ENCODE measurements at regions of chr17 and their contacts with region 1.

Region 1: DNA sequence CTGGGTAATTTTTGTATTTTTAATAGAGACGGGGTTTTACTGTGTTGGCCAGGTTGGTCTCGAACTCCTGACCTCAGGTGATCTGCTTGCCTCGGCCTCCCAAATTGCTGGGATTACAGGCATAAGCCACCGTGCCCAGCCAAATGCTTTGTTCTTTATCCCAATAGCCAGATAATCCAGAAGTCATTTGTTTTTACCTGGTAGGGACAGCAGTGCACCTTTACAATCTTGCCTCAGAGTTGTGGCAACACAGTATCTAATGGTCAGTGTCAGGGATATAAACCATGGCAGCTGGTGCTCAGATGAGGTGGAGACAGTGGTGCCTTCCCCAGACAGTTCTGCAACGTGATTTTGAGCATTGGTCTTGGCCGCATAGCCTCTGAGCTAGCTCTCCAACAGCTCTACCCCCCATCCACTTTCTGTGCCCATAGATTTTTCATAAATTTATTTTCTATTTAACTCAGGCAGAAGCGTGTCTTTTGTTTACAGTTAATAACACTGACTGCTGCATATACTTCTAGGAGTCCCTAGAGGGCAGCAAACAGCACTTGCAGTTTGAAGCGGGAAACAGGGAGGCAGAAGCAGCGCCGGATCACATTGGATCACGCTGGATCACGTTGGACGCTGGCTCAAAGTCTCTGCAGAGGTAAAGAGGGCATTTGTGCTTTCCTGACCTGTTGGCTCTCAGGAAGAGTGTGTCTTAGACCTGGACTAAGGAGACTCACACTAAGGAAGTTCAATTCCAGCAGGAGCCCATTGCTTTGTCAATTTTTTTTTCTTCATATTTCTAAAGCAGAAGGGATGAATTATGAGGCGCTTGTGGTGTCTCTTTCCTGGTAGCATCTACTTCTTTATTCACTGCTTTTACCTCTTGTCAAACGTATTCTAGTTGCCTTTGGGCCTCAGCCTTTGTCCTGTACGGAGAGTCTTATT is 5.1 kb upstream of the GGT6 start:
- DNase-seq: no peak
- ATAC-seq: peak; percentile 78
- H3K4me3 ChIP-seq: no peak overlapping the region
- H3K27ac ChIP-seq: no peak overlapping the region
- H3K4me1 ChIP-seq: peaks cover 32% of the 10 kb centered on the region
- H3K27me3 ChIP-seq: no peaks in the 10 kb centered on the region
- CTCF ChIP-seq: peak; percentile 80 to 92 (median 86)
- EP300 ChIP-seq: no peak
- POLR2A ChIP-seq: no peak
- RAD21 ChIP-seq: peak; percentile 53

Region 2: GRCh38 chr17:4554997-4555799 is 10.3 kb before region 1 on chr17 and contains the start of gene MYBBP1A:
- CTCF ChIA-PET with region 1: interaction called, 60 read pairs
- POLR2A ChIA-PET with region 1: interaction called, 4 read pairs
- RAD21 ChIA-PET with region 1: interaction called, 4 read pairs
- SMC1A ChIA-PET with region 1: no interaction called
- in situ Hi-C with region 1: no loop called
- intact Hi-C with region 1: no loop called
- DNase-seq: peak; percentile 83
- ATAC-seq: peak; percentile 93
- H3K4me3 ChIP-seq: peak within 1 kb of the TSS; percentile 96
- H3K27ac ChIP-seq: peak within 1 kb of the TSS; percentile 87
- H3K4me1 ChIP-seq: peaks cover 21% of the 10 kb centered on the region
- H3K27me3 ChIP-seq: no peaks in the 10 kb centered on the region
- CTCF ChIP-seq: 0 out of 6 replicates have a peak, but pooled peaks of 1 of the 3 experiments have one; percentile 12
- EP300 ChIP-seq: no peak
- POLR2A ChIP-seq: peak; percentile 95
- RAD21 ChIP-seq: no peak
- polyA plus RNA-seq, gene MYBBP1A: 2.5 to 4.2 TPM

Region 3: DNA sequence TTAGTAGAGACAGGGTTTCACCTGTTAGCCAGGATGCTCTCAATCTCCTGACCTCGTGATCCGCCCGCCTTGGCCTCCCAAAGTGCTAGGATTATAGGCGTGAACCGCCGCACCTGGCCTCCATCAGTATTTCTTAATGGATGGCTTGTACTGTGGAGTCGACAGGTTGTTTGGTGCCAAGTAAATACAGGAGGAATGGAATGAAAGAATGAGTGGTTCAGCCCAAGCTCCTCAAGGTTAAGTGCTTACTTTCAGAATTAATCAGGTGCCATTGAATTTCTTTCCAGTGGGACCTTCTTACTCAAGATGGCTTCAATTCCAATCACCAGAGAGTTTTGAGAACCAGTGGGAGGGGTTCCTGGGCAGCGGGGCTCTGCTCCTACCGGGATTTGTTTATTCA is 51.0 kb after region 1 on chr17:
- CTCF ChIA-PET with region 1: interaction called, 12 read pairs
- POLR2A ChIA-PET with region 1: no interaction called
- RAD21 ChIA-PET with region 1: interaction called, 4 read pairs
- SMC1A ChIA-PET with region 1: interaction called, 3 read pairs
- in situ Hi-C with region 1: loop called (anchors 5 kb)
- intact Hi-C with region 1: no loop called
- DNase-seq: no peak
- ATAC-seq: no peak
- H3K4me3 ChIP-seq: no peak overlapping the region
- H3K27ac ChIP-seq: no peak overlapping the region
- H3K4me1 ChIP-seq: no peaks in the 10 kb centered on the region
- H3K27me3 ChIP-seq: no peaks in the 10 kb centered on the region
- CTCF ChIP-seq: no peak
- EP300 ChIP-seq: no peak
- POLR2A ChIP-seq: no peak
- RAD21 ChIP-seq: no peak

Region 4: DNA sequence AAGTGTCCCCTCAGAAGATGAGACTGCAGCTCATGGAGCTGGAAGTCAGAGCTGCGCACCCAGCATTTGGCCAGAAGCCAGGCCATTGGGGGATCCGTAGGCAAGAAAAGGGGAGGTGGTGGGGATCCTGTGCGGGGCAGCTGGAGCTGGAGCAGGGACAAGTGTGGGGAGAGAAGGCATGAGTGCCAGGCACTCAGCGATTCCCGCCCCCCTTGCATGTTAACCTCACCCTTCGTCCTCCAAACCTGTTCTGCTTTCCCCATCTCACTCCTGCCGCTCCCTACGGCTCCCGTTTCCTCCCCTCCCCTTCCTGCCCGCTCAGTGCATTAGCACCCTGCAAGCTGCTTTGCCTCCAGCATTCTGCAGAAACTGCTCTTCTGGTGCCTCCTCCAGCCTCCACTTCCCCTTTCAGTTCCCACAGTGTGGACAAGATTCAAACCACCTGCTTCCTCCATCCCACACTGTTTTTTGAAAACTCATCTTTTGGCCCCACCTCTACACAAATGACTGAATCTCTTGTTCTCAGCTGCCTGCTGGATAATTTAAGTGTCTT is 70.4 kb after region 1 on chr17:
- CTCF ChIA-PET with region 1: interaction called, 15 read pairs
- POLR2A ChIA-PET with region 1: no interaction called
- RAD21 ChIA-PET with region 1: interaction called, 4 read pairs
- SMC1A ChIA-PET with region 1: no interaction called
- in situ Hi-C with region 1: no loop called
- intact Hi-C with region 1: no loop called
- DNase-seq: peak; percentile 64
- ATAC-seq: peak; percentile 88
- H3K4me3 ChIP-seq: no peak overlapping the region
- H3K27ac ChIP-seq: no peak overlapping the region
- H3K4me1 ChIP-seq: peaks cover 22% of the 10 kb centered on the region
- H3K27me3 ChIP-seq: peaks cover 0 to 2% of the 10 kb centered on the region in 2 experiments; a peak in 2 of 4 replicates
- CTCF ChIP-seq: no peak
- EP300 ChIP-seq: no peak
- POLR2A ChIP-seq: no peak
- RAD21 ChIP-seq: no peak

Region 5: DNA sequence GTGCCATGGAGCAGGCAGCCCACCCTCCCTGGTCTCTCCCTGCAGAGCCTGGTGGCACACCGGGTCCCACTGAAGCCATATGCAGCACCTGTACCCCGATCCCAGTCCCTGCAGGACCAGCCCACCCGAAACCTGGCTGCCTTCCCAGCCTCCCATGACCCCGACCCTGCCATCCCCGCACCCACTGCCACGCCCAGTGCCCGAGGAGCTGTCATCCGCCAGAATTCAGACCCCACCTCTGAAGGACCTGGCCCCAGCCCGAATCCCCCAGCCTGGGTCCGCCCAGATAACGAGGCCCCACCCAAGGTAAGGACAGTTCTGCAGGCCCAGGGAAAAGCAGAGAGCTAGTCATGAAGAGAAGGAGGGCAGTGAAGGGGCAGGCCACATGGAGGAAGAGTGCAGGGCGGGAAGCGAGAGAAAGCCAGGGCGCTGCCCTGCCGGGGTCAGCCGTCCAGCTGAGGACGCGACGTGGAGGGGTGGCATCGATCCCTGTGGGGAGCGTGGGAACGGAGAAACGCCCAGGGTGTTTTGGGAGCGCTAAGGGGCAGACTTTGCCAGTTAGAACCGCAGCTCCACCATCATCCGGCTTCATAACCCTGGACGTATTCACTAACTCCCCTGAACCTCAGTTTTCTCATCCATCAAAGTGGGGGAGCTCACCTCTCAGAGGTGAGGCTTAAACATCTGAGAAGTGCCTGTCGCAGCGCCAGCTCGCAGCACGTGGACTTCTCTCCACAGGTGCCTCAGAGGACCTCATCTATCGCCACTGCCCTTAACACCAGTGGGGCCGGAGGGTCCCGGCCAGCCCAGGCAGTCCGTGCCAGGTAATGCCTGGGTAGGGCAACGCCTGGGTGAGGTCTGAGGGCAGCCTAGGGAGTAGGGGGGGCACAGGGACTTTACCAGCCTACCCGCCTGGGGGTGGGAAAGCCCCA is 326.2 kb after region 1 on chr17:
- CTCF ChIA-PET with region 1: interaction called, 17 read pairs
- POLR2A ChIA-PET with region 1: no interaction called
- RAD21 ChIA-PET with region 1: no interaction called
- SMC1A ChIA-PET with region 1: no interaction called
- in situ Hi-C with region 1: no loop called
- intact Hi-C with region 1: loop called (anchors 2 kb)
- DNase-seq: no peak
- ATAC-seq: no peak
- H3K4me3 ChIP-seq: no peak overlapping the region
- H3K27ac ChIP-seq: no peak overlapping the region
- H3K4me1 ChIP-seq: no peaks in the 10 kb centered on the region
- H3K27me3 ChIP-seq: no peaks in the 10 kb centered on the region
- CTCF ChIP-seq: no peak
- EP300 ChIP-seq: no peak
- POLR2A ChIP-seq: peak; percentile 38; the same call in 1 of the 2 replicates
- RAD21 ChIP-seq: no peak

Region 6: DNA sequence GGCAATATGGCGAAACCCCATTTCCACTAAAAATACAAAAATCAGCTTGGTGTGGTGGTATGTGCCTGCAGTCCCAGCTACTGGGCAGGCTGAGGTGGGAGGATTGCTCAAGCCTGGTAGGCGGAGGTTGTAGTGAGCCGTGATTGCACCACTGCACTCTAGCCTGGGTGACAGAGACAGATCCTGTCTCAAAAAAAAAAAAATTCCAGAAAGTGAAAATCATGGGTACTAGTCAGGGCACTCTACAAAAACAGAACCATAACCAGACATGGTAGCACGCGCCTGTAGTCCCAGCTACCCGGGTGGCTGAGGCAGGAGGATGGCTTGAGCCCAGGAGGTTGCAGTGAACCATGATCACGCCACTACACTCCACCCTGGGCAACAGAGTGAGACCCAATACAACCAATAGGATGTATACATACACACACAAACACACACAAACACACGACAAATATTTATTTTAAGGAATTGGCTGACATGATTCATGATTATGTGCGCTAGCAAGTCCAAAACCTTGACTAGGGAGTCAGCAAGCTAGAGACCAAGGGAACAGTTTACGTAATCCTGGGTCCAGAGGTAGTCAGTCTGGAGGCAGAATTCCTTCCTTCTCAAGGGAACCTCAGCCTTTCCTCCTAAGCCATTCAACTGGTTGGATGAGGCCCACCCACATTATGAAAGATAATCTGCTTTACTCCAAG is 355.0 kb after region 1 on chr17:
- CTCF ChIA-PET with region 1: no interaction called
- POLR2A ChIA-PET with region 1: no interaction called
- RAD21 ChIA-PET with region 1: no interaction called
- SMC1A ChIA-PET with region 1: no interaction called
- in situ Hi-C with region 1: no loop called
- intact Hi-C with region 1: no loop called
- DNase-seq: no peak
- ATAC-seq: no peak
- H3K4me3 ChIP-seq: no peak overlapping the region
- H3K27ac ChIP-seq: no peak overlapping the region
- H3K4me1 ChIP-seq: no peaks in the 10 kb centered on the region
- H3K27me3 ChIP-seq: no peaks in the 10 kb centered on the region
- CTCF ChIP-seq: no peak
- EP300 ChIP-seq: no peak
- POLR2A ChIP-seq: no peak
- RAD21 ChIP-seq: no peak

Measured in GM12878 (cell line).